ENCODE measurements at regions of chr12 and their contacts with region 1.

Region 1: DNA sequence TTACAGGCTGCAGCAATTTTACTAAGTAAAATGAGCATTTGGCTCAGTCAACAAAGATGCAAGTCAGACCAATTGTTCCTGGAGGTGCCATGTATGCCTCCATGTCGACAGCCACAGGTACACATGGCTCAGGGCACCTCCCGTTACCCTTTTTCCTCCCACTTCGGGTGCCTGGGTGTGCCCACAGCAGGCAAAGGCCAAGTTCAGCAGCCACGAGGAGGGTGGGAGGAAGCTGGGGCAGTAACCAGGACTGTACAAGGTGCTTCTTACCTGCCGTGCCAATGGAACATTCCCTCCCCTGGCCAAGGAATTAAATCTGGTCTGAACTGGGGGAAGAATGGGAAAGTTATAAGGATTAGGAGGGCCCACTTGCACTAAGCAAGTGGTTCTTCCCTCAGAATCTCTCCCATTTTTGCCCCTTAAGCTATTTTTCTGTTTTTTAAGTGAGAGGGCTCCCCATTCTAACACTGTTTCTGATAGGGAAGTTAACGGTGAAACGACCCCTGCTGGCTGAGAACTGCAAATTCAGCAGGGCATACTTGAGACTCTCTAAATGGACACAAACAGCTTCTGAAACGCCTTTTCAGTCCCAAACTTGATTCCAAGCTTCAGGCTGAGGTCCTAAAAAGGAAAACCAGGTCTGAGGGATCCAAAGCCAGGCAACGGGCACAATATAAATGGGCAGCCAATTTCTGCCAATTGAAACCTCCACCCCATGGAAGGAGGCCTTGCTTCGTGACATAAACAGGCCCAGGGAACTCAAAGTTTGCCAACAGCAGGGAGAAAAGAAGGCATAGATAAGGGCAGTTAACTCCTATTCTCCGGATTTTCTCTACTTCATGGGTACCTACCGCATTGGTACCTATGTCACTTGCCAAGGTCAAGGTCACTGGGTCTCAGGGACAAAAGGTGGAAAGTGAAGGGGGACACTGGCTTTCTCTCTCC is 24.8 kb downstream of the CLECL1 start:
- DNase-seq: peak; percentile 82
- ATAC-seq: peak; percentile 85
- H3K4me3 Mint-ChIP-seq: peak overlapping the region; percentile 60
- H3K27ac Mint-ChIP-seq: peak overlapping the region; percentile 94
- H3K4me1 Mint-ChIP-seq: peaks cover 50% of the 10 kb centered on the region
- H3K27me3 Mint-ChIP-seq: no peaks in the 10 kb centered on the region

Region 2: DNA sequence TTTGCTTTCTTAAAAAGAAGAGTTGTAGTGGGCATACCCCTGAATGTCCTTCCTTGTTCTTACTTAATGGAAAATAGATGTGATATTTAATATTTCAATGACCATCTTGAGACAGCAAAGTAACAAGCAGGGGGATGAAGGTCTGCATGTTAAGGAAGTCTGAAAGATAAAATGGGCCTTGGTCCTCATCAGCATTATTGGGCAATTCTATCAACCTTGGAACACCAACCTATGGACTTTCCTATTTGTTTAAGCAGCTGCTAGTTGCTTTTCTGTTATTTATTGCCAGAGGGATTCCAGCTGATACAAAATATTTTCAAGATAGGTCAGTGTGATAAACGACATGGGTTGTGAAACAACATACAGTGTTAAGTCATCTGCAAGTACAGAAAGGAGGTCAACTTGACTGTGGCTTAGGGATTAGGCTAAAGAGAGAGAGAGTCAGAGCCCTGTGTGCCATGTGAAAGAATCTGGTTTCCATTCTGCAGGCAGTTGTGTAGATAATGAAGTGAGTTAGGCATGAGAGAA is 576.1 kb before region 1 on chr12:
- CTCF ChIA-PET with region 1: no interaction called
- POLR2A ChIA-PET with region 1: no interaction called
- intact Hi-C with region 1: no loop called
- DNase-seq: no peak
- ATAC-seq: no peak
- H3K4me3 Mint-ChIP-seq: no peak overlapping the region
- H3K27ac Mint-ChIP-seq: no peak overlapping the region
- H3K4me1 Mint-ChIP-seq: no peaks in the 10 kb centered on the region
- H3K27me3 Mint-ChIP-seq: no peaks in the 10 kb centered on the region

Region 3: DNA sequence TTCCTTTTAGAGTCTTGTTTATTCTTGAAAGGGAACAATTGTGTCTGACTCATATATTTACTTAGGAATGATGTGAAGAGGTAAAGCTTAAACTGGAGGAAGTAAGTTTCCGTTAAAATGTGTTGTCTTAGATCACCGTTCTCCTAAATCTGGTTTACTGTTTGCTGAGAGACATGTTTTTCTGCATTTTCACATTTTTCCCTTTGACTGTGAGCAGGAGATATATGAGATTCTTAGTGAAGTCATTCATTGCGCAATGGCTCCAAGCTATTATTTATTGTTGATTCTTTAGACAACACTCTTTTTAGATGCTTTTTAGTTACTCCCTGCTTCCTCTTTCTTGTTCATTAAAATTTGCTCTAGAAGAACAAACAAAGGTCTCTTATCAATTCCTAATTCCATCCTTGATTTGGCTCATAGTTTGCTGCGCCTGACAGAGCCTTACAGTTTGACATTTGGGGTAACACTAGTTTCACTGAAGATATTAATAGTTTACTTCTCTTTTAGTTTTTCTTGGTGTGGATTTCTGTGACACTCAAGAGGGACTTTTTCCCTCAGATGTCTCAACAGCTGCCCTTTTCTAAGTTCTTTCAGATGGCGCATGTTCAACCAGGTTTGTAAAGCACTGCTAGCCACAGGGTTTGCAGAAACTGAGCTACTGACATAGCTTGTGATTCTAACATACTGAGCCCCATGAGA is 13.4 kb after region 1 on chr12:
- CTCF ChIA-PET with region 1: interaction called, 18 read pairs
- POLR2A ChIA-PET with region 1: interaction called, 3 read pairs
- intact Hi-C with region 1: no loop called
- DNase-seq: no peak
- ATAC-seq: no peak
- H3K4me3 Mint-ChIP-seq: no peak overlapping the region
- H3K27ac Mint-ChIP-seq: no peak overlapping the region
- H3K4me1 Mint-ChIP-seq: peaks cover 28% of the 10 kb centered on the region
- H3K27me3 Mint-ChIP-seq: no peaks in the 10 kb centered on the region

Region 4: DNA sequence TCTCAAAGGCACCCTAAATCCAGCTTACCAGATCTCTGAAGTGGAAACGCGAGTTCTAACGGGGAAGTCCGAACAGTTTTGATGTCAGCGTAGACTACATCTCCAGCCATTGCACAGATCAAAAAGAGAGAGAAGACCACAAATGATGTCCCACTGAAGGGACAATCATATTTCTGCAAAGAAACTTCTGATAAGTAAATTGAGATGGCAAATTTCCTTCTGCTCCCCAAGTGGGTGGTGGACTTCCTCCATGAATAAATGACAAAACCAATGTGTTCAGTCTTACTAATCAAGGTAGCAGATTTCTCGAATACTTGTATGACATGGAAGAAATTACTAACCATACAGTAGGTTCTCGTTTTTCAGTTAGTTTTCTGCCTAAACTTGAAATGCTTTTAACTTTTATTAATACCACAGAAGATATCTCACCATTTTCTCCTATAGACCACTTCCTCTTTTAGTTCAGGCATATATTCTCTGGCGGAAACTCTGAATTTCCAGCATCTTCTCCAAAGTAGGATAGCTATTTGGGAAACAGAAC is 24.9 kb after region 1 on chr12 and contains the start of gene CLECL1:
- CTCF ChIA-PET with region 1: interaction called, 7 read pairs
- POLR2A ChIA-PET with region 1: no interaction called
- intact Hi-C with region 1: loop called in 1 of 2 experiments (anchors 2 kb)
- DNase-seq: no peak
- ATAC-seq: peak; percentile 79
- H3K4me3 Mint-ChIP-seq: peak within 1 kb of the TSS; percentile 69
- H3K27ac Mint-ChIP-seq: peak within 1 kb of the TSS; percentile 84
- H3K4me1 Mint-ChIP-seq: peaks cover 53% of the 10 kb centered on the region
- H3K27me3 Mint-ChIP-seq: no peaks in the 10 kb centered on the region
- total RNA-seq, gene CLECL1: 3.1 to 3.8 TPM

Region 5: GRCh38 chr12:10260927-10261326 is 552.8 kb after region 1 on chr12:
- CTCF ChIA-PET with region 1: no interaction called
- POLR2A ChIA-PET with region 1: no interaction called
- intact Hi-C with region 1: no loop called
- DNase-seq: no peak
- ATAC-seq: no peak
- H3K4me3 Mint-ChIP-seq: no peak overlapping the region
- H3K27ac Mint-ChIP-seq: no peak overlapping the region
- H3K4me1 Mint-ChIP-seq: no peaks in the 10 kb centered on the region
- H3K27me3 Mint-ChIP-seq: peaks cover 6% of the 10 kb centered on the region

Measured in activated CD4-positive, alpha-beta T cell treated with anti-CD3 and anti-CD28 coated beads for 36 hours (primary cell).